AG04449 (cell line): ENCODE measurements at regions of chr9 and their contacts with region 1.

Region 1: GRCh38 chr9:128863647-128864046 is 18.1 kb downstream of the KYAT1 start:
- DNase-seq: no peak
- H3K4me3 ChIP-seq: no peak overlapping the region
- CTCF ChIP-seq: peak; percentile 95

Region 2: GRCh38 chr9:128845155-128845931 is 18.3 kb before region 1 on chr9:
- CTCF ChIA-PET with region 1: interaction called, 15 read pairs
- POLR2A ChIA-PET with region 1: no interaction called
- DNase-seq: no peak
- H3K4me3 ChIP-seq: no peak overlapping the region
- CTCF ChIP-seq: no peak

Region 3: DNA sequence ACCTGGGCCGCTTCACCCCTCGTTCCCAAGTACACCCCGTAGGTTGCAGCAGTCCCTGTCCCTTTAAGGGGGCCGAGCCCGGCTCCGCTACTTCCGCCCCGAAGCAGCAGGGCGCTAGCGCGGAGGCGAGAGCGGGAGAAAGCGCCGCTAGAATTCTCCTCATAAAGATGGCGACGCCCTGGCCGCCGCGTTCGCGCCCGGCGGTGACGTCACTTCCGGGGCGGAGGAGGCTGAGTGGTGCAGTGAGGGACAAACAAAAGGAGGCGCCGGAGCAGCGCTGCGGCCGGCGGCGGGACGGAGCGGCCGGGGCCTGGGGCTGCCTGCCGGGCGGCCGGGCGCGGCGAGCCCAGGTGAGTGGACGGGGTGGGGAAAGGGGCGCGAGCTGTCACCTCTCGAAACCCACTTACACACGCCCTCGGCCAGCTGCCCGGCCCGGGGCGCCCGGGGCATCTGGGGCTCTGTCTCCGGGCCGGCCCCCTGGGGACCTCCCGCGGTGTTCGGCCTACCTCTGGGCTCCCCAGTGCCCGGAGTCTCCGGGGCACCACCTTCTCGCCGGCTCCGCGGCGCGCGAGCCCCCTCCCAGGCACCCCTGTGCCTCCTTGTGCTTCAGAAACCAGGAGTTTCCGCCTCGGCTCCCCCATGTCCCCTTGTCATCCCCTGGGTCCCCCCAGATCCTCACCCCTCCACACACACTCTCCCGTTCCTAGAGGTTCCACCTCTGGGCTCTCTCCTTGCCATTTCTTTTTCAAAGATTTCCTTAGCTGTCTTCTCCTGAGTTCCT is 18.4 kb after region 1 on chr9 and contains the starts of genes KYAT1 and LRRC8A:
- CTCF ChIA-PET with region 1: interaction called, 125 read pairs
- POLR2A ChIA-PET with region 1: no interaction called
- DNase-seq: peak; percentile 45
- H3K4me3 ChIP-seq: peak within 1 kb of the TSS; percentile 96
- CTCF ChIP-seq: no peak

Region 4: GRCh38 chr9:128920381-128921058 is 56.9 kb after region 1 on chr9 and contains the start of gene PHYHD1:
- CTCF ChIA-PET with region 1: interaction called, 294 read pairs
- POLR2A ChIA-PET with region 1: no interaction called
- DNase-seq: peak; percentile 33
- H3K4me3 ChIP-seq: no peak within 1 kb of the TSS; the same call in 1 of the 2 replicates
- CTCF ChIP-seq: no peak

Region 5: GRCh38 chr9:129028192-129028957 is 164.7 kb after region 1 on chr9 and contains the start of gene SH3GLB2:
- CTCF ChIA-PET with region 1: interaction called, 12 read pairs
- POLR2A ChIA-PET with region 1: no interaction called
- DNase-seq: peak; percentile 59
- H3K4me3 ChIP-seq: peak within 1 kb of the TSS; percentile 77
- CTCF ChIP-seq: peak; percentile 87